ENCODE measurements at regions of chr9 and their contacts with region 1.

Region 1: GRCh38 chr9:92716557-92716956 is 46.6 kb upstream of the IPPK start:
- DNase-seq: peak; percentile 82
- ATAC-seq: peak; percentile 79
- H3K4me3 ChIP-seq: no peak overlapping the region
- H3K4me3 Mint-ChIP-seq: no peak overlapping the region
- H3K27ac ChIP-seq: no peak overlapping the region
- H3K27ac Mint-ChIP-seq: no peak overlapping the region
- H3K4me1 ChIP-seq: peaks cover 31 to 66% of the 10 kb centered on the region in 2 donors
- H3K4me1 Mint-ChIP-seq: peaks cover 54% of the 10 kb centered on the region
- H3K27me3 ChIP-seq: no peaks in the 10 kb centered on the region
- H3K27me3 Mint-ChIP-seq: no peaks in the 10 kb centered on the region
- CTCF ChIP-seq: peak; percentile 93

Region 2: GRCh38 chr9:92808726-92809451 is 92.3 kb after region 1 on chr9:
- CTCF ChIA-PET with region 1: interaction called, 12 read pairs
- POLR2A ChIA-PET with region 1: no interaction called
- intact Hi-C with region 1: no loop called
- DNase-seq: peak; percentile 75
- ATAC-seq: peak; percentile 72
- H3K4me3 ChIP-seq: peak overlapping the region in 4 of 5 experiments; percentile 39 to 74 (median 56)
- H3K4me3 Mint-ChIP-seq: peak overlapping the region; percentile 91
- H3K27ac ChIP-seq: no peak overlapping the region
- H3K27ac Mint-ChIP-seq: no peak overlapping the region
- H3K4me1 ChIP-seq: peaks cover 32 to 36% of the 10 kb centered on the region in 2 donors
- H3K4me1 Mint-ChIP-seq: peaks cover 25% of the 10 kb centered on the region
- H3K27me3 ChIP-seq: peaks cover 0 to 65% (median 56%) of the 10 kb centered on the region in 4 experiments
- H3K27me3 Mint-ChIP-seq: peaks cover 48% of the 10 kb centered on the region
- CTCF ChIP-seq: peak; percentile 30